ENCODE measurements at regions of chr4 and their contacts with region 1.

Region 1: DNA sequence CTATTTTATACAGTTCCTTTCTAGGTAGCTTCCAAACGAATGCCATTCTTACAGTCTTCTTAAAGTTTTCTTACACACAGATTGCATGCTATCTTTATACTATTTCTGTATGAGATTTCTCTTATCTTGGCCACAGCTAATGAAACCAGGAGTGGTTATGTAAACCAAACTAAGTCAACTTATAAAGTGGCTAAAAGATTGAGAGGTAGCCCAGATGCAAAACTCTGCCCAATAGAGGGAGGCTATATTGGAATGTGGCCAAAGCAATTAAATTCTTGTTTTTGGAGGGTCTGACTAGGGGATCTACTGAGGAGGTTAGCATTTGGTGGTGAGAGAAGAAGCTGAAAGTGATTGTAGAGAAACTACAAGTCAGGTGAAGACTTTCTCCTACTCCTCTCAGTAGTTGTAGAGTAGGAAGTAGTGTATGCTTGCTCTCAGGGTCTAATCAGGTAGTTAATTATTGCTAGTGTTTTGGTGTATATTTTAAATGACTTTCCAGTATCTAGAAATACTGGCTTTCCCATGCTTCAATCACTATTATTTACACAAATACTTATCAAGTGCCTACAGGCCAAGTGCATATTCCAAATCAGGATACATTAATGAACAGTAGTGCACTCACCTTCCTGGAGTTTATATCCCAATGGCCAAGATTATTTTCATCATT is 104.2 kb upstream of the HPGD start:
- DNase-seq: no peak
- ATAC-seq: no peak
- H3K4me3 ChIP-seq: no peak overlapping the region
- H3K27ac ChIP-seq: no peak overlapping the region
- H3K4me1 ChIP-seq: no peaks in the 10 kb centered on the region
- H3K27me3 ChIP-seq: no peaks in the 10 kb centered on the region
- CTCF ChIP-seq: no peak
- EP300 ChIP-seq: no peak
- POLR2A ChIP-seq: no peak
- RAD21 ChIP-seq: no peak

Region 2: GRCh38 chr4:174058846-174059245 is 567.6 kb before region 1 on chr4:
- CTCF ChIA-PET with region 1: no interaction called
- POLR2A ChIA-PET with region 1: no interaction called
- in situ Hi-C with region 1: no loop called
- intact Hi-C with region 1: no loop called
- DNase-seq: no peak
- ATAC-seq: no peak
- H3K4me3 ChIP-seq: no peak overlapping the region
- H3K27ac ChIP-seq: no peak overlapping the region
- H3K4me1 ChIP-seq: no peaks in the 10 kb centered on the region
- H3K27me3 ChIP-seq: no peaks in the 10 kb centered on the region
- CTCF ChIP-seq: no peak
- EP300 ChIP-seq: no peak
- POLR2A ChIP-seq: no peak
- RAD21 ChIP-seq: no peak

Region 3: GRCh38 chr4:174591243-174592021 is 35.0 kb before region 1 on chr4:
- CTCF ChIA-PET with region 1: no interaction called
- POLR2A ChIA-PET with region 1: no interaction called
- in situ Hi-C with region 1: no loop called
- intact Hi-C with region 1: no loop called
- DNase-seq: no peak
- ATAC-seq: no peak
- H3K4me3 ChIP-seq: no peak overlapping the region
- H3K27ac ChIP-seq: no peak overlapping the region
- H3K4me1 ChIP-seq: no peaks in the 10 kb centered on the region
- H3K27me3 ChIP-seq: no peaks in the 10 kb centered on the region
- CTCF ChIP-seq: no peak
- EP300 ChIP-seq: no peak
- POLR2A ChIP-seq: no peak
- RAD21 ChIP-seq: no peak

Region 4: DNA sequence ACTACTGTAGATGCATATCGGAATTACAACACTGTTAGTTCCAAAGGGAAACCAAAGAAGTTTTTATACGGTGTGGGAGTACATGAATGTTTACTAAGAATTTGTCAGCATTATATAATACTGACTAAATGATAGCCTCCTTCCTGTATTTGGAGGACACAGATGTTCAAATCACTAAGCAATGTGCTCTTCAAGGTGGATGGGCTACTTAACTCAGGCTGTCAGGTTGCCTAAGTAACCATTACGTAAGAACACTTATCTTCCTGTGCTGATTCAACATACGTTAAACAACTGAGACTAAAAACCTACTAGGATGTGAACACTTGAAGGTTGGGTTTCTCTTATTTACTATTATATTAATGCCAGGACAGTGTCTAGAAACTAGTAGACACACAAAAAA is 22.3 kb before region 1 on chr4:
- CTCF ChIA-PET with region 1: no interaction called
- POLR2A ChIA-PET with region 1: no interaction called
- in situ Hi-C with region 1: no loop called
- intact Hi-C with region 1: no loop called
- DNase-seq: no peak
- ATAC-seq: no peak
- H3K4me3 ChIP-seq: no peak overlapping the region
- H3K27ac ChIP-seq: no peak overlapping the region
- H3K4me1 ChIP-seq: no peaks in the 10 kb centered on the region
- H3K27me3 ChIP-seq: no peaks in the 10 kb centered on the region
- CTCF ChIP-seq: no peak
- EP300 ChIP-seq: no peak
- POLR2A ChIP-seq: no peak
- RAD21 ChIP-seq: no peak

Region 5: DNA sequence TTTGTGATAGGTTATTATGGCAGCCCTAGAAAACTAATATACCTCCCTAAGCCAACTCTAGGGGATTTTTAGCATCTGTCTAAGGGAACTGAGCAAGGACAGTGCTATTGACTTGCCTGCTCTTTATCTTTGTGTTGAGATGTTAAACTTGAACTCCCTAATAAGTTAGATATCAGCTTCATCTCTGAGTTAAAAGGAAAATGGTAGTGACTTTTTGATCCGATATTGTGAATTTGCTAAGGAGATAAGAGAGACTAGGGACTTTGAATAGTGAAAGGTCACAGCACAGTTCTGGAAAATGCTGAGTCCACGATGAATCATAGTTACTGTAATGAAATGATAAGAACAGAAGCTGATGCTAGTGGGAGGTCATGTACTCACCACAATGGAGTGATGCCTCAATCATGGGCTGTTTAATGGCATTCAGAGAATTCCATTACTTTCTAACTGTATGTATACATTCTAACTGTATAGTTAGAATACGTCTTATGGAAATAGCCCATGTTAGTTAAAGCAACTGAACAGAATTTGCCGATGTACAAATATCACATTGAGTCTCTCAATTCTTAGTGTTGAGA is 55.3 kb after region 1 on chr4:
- CTCF ChIA-PET with region 1: no interaction called
- POLR2A ChIA-PET with region 1: no interaction called
- in situ Hi-C with region 1: no loop called
- intact Hi-C with region 1: loop called (anchors 2 kb)
- DNase-seq: no peak
- ATAC-seq: no peak
- H3K4me3 ChIP-seq: no peak overlapping the region
- H3K27ac ChIP-seq: no peak overlapping the region
- H3K4me1 ChIP-seq: no peaks in the 10 kb centered on the region
- H3K27me3 ChIP-seq: no peaks in the 10 kb centered on the region
- CTCF ChIP-seq: no peak
- EP300 ChIP-seq: no peak
- POLR2A ChIP-seq: no peak
- RAD21 ChIP-seq: no peak

Measured in HepG2 (cell line).